ENCODE measurements at regions of chr6 and their contacts with region 1.

Region 1: GRCh38 chr6:85642774-85643536 is at the start of gene SYNCRIP:
- DNase-seq: peak; percentile 99
- H3K4me3 Mint-ChIP-seq: peak within 1 kb of the TSS; percentile 92
- H3K27ac Mint-ChIP-seq: peak within 1 kb of the TSS; percentile 99
- H3K4me1 Mint-ChIP-seq: peaks cover 48% of the 10 kb centered on the region
- H3K27me3 Mint-ChIP-seq: peaks cover 1% of the 10 kb centered on the region
- total RNA-seq, gene SYNCRIP: 100.0 to 101 TPM

Region 2: GRCh38 chr6:85628353-85628752 is 14.6 kb before region 1 on chr6:
- CTCF ChIA-PET with region 1: interaction called, 6 read pairs
- POLR2A ChIA-PET with region 1: interaction called, 38 read pairs
- DNase-seq: no peak
- H3K4me3 Mint-ChIP-seq: no peak overlapping the region
- H3K27ac Mint-ChIP-seq: no peak overlapping the region
- H3K4me1 Mint-ChIP-seq: peaks cover 54% of the 10 kb centered on the region
- H3K27me3 Mint-ChIP-seq: no peaks in the 10 kb centered on the region

Region 3: DNA sequence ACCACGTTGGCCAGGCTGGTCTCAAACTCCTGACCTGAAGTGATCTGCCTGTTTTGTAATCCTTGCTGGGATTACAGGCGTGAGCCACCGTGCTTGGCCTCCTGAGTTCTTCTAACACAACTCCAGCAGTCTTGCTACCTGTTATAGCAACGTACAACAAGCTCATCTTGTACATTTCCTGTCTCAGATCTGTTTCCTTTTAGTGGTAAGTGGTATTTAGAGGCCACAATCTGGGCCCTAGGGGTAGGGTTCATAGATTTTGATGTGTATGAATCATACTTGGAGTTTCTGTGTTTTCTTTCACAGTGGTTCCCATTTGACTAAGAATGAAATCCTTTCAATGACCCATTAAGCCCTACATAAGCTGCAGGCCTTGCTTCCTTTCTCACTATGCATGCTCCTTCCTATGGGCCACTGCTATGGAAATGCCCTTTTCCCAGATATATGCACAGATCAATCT is 26.8 kb after region 1 on chr6:
- CTCF ChIA-PET with region 1: interaction called, 116 read pairs
- POLR2A ChIA-PET with region 1: interaction called, 1,187 read pairs
- DNase-seq: peak; percentile 62
- H3K4me3 Mint-ChIP-seq: peak overlapping the region; percentile 68
- H3K27ac Mint-ChIP-seq: peak overlapping the region; percentile 96
- H3K4me1 Mint-ChIP-seq: peaks cover 64% of the 10 kb centered on the region
- H3K27me3 Mint-ChIP-seq: no peaks in the 10 kb centered on the region

Measured in activated CD4-positive, alpha-beta memory T cell treated with anti-CD3 and anti-CD28 coated beads, Interleukin-2, amount 10 ng/mL, durations not matched to agents 7 days and 5 days (primary cell).